Calu3 (cell line): ENCODE measurements at regions of chr4 and their contacts with region 1.

Region 1: DNA sequence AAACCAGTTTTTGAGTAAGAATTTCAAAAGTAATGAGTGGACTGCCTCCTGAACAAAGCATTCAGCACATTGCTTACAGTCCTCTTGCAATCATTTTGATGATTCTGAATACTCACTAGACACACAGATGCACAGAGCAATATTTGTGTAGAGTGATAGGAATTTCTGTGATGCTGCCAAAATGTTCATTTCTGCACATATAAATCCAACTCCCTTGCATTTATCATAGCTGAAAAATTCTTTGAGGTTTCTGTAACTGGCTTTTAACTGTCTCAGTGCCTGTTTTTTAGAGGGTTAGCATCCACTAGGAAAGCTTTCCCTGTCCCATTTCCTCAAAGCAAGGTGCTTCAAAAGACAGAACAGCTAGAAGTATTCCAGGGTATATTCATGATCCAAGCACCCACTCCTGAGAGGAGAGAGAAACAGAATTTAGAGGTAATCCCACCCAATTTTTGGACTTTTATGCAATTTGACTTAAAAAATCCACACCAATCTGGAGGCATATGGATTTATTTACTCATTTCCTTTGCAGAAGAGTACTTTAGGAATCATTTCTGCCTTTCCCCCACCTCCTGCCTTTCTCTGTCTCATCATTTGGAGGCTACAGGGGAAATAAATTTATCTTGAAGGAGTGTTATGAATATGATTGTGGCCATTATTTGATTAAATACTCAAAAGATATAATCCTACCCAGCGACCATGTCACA is 234.5 kb upstream of the SLIT2 start:
- DNase-seq: no peak
- H3K4me3 Mint-ChIP-seq: no peak overlapping the region
- H3K27ac Mint-ChIP-seq: no peak overlapping the region
- H3K4me1 Mint-ChIP-seq: peaks cover 8% of the 10 kb centered on the region
- H3K27me3 Mint-ChIP-seq: no peaks in the 10 kb centered on the region
- CTCF ChIP-seq: no peak

Region 2: DNA sequence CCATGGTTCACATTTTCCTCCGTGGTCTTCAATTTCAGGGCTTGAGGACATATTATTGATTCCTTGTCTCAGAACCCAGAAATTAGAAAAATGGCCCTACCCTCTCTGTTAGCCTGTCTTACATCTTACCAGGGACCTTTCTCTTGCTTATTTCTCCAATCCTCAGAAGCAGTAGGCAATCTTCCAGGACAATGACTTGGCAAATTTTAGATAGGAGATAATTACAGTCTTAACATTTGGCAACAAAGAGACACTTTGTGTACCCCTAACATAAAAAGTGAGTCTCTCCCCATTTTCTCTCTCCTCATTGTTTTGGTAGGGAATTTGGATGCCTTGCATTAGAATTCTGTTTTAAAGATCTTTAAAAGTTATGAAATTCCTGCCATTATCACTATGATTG is 543.7 kb before region 1 on chr4:
- CTCF ChIA-PET with region 1: no interaction called
- intact Hi-C with region 1: loop called (anchors 5 kb)
- DNase-seq: no peak
- H3K4me3 Mint-ChIP-seq: no peak overlapping the region
- H3K27ac Mint-ChIP-seq: no peak overlapping the region
- H3K4me1 Mint-ChIP-seq: no peaks in the 10 kb centered on the region
- H3K27me3 Mint-ChIP-seq: no peaks in the 10 kb centered on the region
- CTCF ChIP-seq: no peak

Region 3: DNA sequence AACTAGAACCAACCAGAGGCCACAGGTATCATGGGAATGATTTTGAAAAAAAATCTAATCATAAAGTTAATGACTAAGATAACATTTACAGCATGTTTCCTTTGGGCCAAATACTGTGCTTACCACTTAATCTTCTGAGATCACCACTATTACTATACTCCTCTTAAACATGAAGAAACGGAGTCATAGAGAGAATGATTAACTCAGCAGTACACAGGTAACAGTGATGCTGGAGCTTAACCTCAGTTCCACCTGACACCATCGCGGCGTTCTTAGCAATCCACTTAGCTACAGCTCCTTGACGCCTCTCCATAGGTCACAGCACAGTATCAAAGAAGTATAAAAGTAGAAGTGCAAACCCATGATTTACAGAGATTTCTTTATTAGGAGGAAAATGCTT is 358.1 kb before region 1 on chr4:
- CTCF ChIA-PET with region 1: no interaction called
- intact Hi-C with region 1: no loop called
- DNase-seq: no peak
- H3K4me3 Mint-ChIP-seq: no peak overlapping the region
- H3K27ac Mint-ChIP-seq: no peak overlapping the region
- H3K4me1 Mint-ChIP-seq: no peaks in the 10 kb centered on the region
- H3K27me3 Mint-ChIP-seq: no peaks in the 10 kb centered on the region
- CTCF ChIP-seq: no peak

Region 4: DNA sequence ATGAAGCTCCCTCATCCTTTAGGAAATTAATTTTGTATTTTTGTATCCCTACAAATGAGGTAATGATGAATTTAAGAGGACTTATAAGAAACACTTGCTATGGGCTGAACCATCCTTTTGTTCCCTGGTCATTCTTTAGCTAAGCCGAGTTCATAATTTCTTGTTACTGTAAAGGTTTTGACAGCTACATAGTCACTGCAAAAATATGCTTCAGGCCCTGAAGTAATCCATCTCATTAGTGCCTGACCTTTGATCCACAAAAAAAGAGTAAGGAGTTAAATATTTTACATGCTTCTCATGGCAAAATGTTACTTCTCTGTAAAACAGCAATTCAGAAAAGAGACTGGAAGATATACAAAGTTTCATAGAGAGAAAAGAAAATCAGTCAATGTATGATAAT is 56.1 kb before region 1 on chr4:
- CTCF ChIA-PET with region 1: no interaction called
- intact Hi-C with region 1: no loop called
- DNase-seq: no peak
- H3K4me3 Mint-ChIP-seq: no peak overlapping the region
- H3K27ac Mint-ChIP-seq: no peak overlapping the region
- H3K4me1 Mint-ChIP-seq: no peaks in the 10 kb centered on the region
- H3K27me3 Mint-ChIP-seq: no peaks in the 10 kb centered on the region
- CTCF ChIP-seq: no peak

Region 5: GRCh38 chr4:20217521-20217920 is 200.3 kb after region 1 on chr4:
- CTCF ChIA-PET with region 1: no interaction called
- intact Hi-C with region 1: no loop called
- DNase-seq: no peak
- H3K4me3 Mint-ChIP-seq: no peak overlapping the region
- H3K27ac Mint-ChIP-seq: no peak overlapping the region
- H3K4me1 Mint-ChIP-seq: no peaks in the 10 kb centered on the region
- H3K27me3 Mint-ChIP-seq: no peaks in the 10 kb centered on the region
- CTCF ChIP-seq: no peak